ENCODE measurements at regions of chr1 and their contacts with region 1.

Region 1: GRCh38 chr1:230066466-230067404 is at the start of gene GALNT2:
- DNase-seq: peak; percentile 87 to 90
- ATAC-seq: peak; percentile 92 to 98 (median 95)
- H3K4me3 ChIP-seq: peak within 1 kb of the TSS; percentile 65 to 97 (median 89)
- H3K27ac ChIP-seq: peak within 1 kb of the TSS; percentile 85 to 97 (median 92)
- H3K4me1 ChIP-seq: peaks cover 4 to 46% (median 27%) of the 10 kb centered on the region in 9 donors
- H3K27me3 ChIP-seq: no peaks in the 10 kb centered on the region
- CTCF ChIP-seq: no peak
- total RNA-seq, gene GALNT2: 21.3 to 35.1 (median 25.8) TPM

Region 2: DNA sequence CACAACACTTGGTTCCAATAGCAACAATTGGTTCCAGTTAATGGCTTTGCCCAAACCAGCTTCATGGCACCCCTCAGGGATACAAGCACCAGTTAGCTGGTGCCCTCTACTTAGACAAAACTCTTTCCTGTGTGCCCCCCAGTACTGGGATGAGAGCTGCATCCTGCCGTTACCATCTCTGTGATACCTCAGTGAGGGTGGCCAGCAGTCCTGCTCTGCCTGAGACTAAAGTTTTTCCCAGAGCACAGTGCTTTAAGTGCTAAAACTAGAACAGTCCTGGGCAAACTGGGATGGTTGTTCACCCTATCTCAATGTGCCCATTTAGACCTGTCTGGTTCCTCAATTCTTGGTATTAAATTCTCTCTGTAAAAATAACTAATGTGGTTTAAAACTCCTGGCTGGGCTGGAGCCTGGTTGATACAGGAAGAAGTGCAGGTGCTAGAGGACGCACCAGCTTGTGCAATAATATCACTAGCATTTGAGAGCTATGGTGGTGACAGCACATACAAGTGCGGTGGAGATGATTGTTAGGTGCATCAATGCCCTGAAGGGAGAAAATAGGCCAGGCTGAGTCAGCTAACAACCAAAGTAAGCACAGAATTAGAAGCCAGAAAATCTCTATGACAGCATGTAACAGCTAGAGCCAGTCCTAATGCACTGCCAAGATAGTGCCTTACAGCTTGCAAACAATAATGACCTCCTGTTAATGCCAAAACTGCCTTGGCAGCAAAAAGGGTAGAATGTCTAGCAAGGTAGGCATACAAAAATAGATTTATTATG is 179.5 kb before region 1 on chr1:
- intact Hi-C with region 1: loop called in 1 of 10 experiments (anchors 5 kb)
- DNase-seq: peak in 1 of 2 donors; percentile 51
- ATAC-seq: peak; percentile 82 to 94 (median 90)
- H3K4me3 ChIP-seq: no peak overlapping the region
- H3K27ac ChIP-seq: peak overlapping the region; percentile 60 to 86 (median 71)
- H3K4me1 ChIP-seq: peaks cover 0 to 25% (median 3%) of the 10 kb centered on the region in 9 donors
- H3K27me3 ChIP-seq: no peaks in the 10 kb centered on the region
- CTCF ChIP-seq: no peak

Region 3: DNA sequence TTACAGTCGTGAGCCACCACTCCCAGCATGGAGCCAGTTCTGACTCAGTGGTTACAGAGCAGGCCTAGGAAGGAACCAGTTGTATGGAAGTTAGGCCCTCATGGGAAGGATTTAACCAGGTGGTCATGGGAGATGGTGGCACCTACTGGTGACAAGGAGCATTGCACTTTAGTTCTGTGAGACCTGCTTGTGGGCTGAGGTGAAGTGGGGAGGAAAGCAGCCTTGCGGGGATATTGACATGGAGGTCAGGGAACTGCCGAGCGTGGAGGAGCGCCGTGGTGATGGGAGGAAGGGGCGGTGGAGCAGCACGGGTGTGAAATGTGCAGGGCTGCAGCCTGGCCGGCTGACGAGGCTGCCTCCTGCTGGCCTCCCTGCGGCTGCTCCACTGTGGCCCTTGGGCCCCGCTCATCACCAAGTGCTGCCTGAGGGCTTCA is 100.7 kb after region 1 on chr1:
- intact Hi-C with region 1: loop called in 1 of 10 experiments (anchors 10 kb)
- DNase-seq: no peak
- ATAC-seq: peak in 4 of 8 donors; percentile 26 to 47 (median 32)
- H3K4me3 ChIP-seq: no peak overlapping the region
- H3K27ac ChIP-seq: no peak overlapping the region
- H3K4me1 ChIP-seq: peaks cover 0 to 57% (median 20%) of the 10 kb centered on the region in 9 donors
- H3K27me3 ChIP-seq: no peaks in the 10 kb centered on the region
- CTCF ChIP-seq: peak; percentile 18 to 78 (median 67)

Region 4: DNA sequence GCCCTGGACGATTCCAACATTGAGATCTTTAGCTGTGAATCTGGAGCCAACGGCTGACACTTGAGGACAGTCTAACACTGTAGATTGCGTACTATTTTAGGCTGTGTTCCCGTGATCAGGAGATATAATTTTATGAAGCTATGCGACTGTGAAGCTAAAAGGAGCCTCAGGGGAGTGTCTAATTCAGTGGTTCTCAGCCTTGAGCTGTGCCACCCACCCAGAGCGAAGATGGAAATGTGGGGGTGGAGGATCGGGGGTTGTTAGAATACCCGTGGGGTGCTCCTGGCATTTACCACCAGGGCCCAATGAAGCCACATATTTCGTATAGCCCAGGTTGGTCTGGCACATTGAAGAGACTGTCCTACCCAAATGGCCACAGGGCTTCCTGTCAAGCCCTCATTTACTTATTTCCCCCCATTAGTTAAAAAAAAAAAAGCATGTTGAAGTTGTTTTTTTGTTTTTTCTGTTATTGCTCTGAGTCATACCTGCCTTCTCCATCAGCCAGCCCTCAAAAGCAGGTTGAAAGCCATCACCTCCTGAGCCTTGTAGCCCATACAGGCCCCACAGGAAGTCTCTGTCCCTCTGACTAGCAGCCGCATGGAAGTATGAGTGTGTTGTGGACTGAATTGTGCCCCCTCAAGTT is 142.0 kb after region 1 on chr1:
- intact Hi-C with region 1: loop called in 3 of 10 experiments (anchors 5 to 10 kb)
- DNase-seq: no peak
- ATAC-seq: peak in 7 of 8 donors; percentile 35 to 67 (median 54)
- H3K4me3 ChIP-seq: no peak overlapping the region
- H3K27ac ChIP-seq: peak overlapping the region in 7 of 10 donors; percentile 55 to 77 (median 72)
- H3K4me1 ChIP-seq: peaks cover 8 to 82% (median 54%) of the 10 kb centered on the region in 9 donors
- H3K27me3 ChIP-seq: no peaks in the 10 kb centered on the region
- CTCF ChIP-seq: peak in 2 of 9 donors; percentile 9 to 26

Region 5: DNA sequence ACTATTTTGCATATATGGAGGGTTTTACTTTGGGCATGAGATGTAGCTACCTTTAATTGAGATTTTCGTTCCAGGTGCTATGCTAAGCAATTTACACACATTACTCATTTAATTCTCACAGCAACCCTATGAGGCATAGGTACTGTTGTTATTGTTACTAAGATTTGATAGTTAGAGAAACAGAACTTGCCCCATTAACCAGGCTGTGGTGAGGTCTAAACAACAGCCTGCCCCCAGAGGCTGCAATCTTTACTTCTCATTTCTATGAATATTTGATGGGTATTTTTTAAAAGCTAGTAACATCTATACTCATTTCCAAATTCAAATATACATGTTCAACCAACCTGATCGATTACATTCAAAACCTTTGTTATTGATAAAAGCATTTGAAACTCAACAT is 155.9 kb after region 1 on chr1:
- intact Hi-C with region 1: loop called in 3 of 10 experiments (anchors 5 to 10 kb)
- DNase-seq: no peak
- ATAC-seq: peak in 2 of 8 donors; percentile 28 to 40
- H3K4me3 ChIP-seq: peak overlapping the region in 2 of 10 donors; percentile 1 to 13
- H3K27ac ChIP-seq: peak overlapping the region in 5 of 10 donors; percentile 18 to 69 (median 39)
- H3K4me1 ChIP-seq: peaks cover 0 to 43% (median 12%) of the 10 kb centered on the region in 9 donors
- H3K27me3 ChIP-seq: no peaks in the 10 kb centered on the region
- CTCF ChIP-seq: peak in 1 of 9 donors; percentile 17

Measured in heart right ventricle (tissue), 16 donors.